Activated T-helper 1 cell treated with anti-CD3 and anti-CD28 coated beads, Interleukin-12 subunit alpha, Interleukin-12 subunit beta, Interleukin-2, Interleukin-4 antibody, amounts not matched to agents 30 ng/mL and 10 ng/mL and 1 ng/mL, durations not matched to agents 14 hours and 24 hours and 36 hours (primary cell): ENCODE measurements at regions of chr17 and their contacts with region 1.

Region 1: DNA sequence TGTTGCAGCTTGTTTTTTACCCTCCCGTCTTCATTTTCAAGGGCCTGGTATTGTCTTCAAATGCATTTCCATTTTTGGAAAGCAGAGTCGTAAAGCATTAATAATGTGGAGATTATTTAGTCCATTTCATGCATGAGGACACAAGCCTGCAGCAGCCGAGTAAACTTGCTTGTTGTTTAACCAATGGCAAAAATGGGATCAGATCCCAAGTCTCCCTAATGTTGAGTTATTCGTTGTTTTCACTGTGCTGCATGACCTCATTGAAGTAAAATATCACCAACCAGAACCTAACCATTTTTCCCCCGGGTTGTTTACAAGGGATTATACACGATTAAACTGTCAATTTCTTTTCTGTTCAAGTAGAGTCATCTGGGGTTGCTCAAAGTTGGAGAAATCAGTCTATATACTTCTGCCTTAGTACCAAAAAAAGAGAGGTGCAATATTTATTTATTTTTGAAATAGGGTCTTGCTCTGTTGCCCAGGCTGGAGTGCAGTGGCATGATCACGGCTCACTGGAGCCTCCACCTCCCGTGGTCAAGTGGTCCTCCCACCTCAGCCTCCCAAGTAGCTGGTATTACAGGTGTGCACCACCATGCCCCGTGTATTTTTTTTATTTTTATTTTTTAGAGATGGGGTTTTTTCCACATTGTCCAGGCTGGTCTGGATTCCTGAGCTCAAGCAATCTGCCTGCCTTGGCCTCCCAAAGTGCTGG is 12.4 kb downstream of the AMZ2 start:
- DNase-seq: no peak
- H3K4me3 Mint-ChIP-seq: peak overlapping the region; percentile 80
- H3K27ac Mint-ChIP-seq: no peak overlapping the region
- H3K4me1 Mint-ChIP-seq: peaks cover 58% of the 10 kb centered on the region
- H3K27me3 Mint-ChIP-seq: no peaks in the 10 kb centered on the region

Region 2: DNA sequence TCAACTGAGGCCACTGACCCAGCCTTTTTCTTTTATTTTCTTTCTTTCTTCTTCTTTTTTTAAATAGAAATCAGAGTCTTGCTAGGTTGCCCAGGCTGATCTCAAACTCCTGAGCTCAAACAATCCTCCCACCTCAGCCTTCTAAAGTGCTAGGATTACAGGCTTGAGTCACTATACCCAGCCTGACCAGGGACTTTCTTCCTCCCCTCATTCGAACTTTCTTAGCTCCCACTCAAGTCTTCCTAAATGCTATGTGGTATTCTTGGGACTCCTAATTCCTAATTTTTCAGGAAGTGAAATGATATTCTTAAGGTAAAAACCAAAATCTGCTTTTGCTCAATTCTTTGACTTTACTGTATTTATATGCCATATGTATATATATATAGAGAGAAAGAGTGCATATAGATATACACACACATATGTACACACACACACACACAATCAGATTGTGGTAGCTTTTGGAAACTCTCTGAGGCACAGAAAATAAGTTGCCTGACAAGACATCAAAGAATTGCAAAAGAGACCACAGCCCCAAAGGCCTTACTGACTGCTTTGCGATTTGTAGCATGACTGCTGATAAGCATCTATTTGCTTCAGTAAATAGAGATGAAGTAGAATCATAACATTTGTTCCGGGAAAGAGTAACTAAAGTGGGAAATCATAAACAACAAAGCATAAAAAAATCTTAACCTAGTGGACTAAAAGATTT is 21.9 kb before region 1 on chr17:
- intact Hi-C with region 1: loop called (anchors 1 kb)
- DNase-seq: no peak
- H3K4me3 Mint-ChIP-seq: peak overlapping the region; percentile 82
- H3K27ac Mint-ChIP-seq: peak overlapping the region; percentile 95
- H3K4me1 Mint-ChIP-seq: peaks cover 53% of the 10 kb centered on the region
- H3K27me3 Mint-ChIP-seq: no peaks in the 10 kb centered on the region

Region 3: DNA sequence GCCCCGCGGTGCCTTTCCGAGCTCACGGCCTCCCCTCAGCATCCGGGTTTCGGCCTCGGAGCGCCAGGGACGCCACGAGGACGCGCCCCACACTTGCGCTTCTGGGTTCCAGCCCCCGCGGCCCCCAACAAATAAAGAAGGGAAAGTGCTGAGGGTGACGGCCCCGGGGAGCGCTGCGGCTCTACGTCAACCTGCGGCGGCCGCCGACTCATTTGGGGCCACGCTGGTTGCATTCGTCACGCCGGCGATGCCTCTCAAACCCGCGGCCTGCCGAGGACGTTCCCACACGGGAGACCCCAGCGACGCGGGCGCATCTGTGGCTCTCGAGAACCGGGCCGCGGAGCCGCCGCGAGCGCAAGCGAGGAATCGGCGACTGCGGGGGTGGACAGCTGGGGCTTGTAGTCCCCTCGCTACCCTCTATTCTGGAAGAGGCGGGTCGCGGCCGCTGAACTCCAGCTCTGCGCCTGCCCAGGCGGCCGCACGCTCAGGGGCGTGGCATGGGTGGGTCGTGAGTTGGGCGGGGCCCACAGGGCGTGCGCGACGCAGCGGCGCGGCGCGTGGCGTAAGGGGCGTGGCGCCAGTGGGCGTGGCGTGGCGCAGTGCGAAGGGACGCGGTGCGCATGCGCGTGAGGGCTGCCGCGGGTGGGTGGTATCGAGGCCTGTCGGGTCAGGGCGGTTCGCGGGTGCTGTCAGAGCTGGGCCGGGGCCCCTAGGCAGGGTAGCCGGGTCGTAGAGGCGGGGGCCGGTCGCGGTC is 12.6 kb before region 1 on chr17 and contains the start of gene AMZ2:
- intact Hi-C with region 1: loop called (anchors 1 kb)
- DNase-seq: peak; percentile 98
- H3K4me3 Mint-ChIP-seq: peak within 1 kb of the TSS; percentile 88
- H3K27ac Mint-ChIP-seq: peak within 1 kb of the TSS; percentile 96
- H3K4me1 Mint-ChIP-seq: peaks cover 49% of the 10 kb centered on the region
- H3K27me3 Mint-ChIP-seq: no peaks in the 10 kb centered on the region
- total RNA-seq, gene AMZ2: 67.3 and 75.7 TPM in 2 replicates

Region 4: DNA sequence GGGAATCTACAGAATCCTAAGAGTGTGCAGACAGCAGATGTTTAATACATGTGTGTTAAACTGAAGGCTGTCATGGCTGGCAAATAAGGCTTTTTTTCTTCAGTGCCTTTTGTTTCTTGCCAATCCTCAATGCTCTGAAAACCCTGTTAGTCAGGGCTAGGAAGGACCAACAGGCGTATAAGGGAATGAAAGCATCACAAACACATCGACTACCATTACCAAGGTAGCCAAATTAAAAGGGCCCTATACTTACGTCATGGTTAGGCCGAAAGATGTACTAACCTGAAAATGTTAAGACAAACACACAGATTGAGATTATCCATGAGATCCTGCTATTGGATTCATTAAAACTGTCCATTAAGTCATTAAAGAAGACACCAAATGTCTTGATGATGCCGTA is 17.6 kb after region 1 on chr17:
- intact Hi-C with region 1: no loop called
- DNase-seq: no peak
- H3K4me3 Mint-ChIP-seq: no peak overlapping the region
- H3K27ac Mint-ChIP-seq: no peak overlapping the region
- H3K4me1 Mint-ChIP-seq: no peaks in the 10 kb centered on the region
- H3K27me3 Mint-ChIP-seq: no peaks in the 10 kb centered on the region

Region 5: GRCh38 chr17:68398691-68399637 is 138.8 kb after region 1 on chr17:
- intact Hi-C with region 1: loop called (anchors 2 kb)
- DNase-seq: peak; percentile 9
- H3K4me3 Mint-ChIP-seq: peak overlapping the region; percentile 49
- H3K27ac Mint-ChIP-seq: peak overlapping the region; percentile 85
- H3K4me1 Mint-ChIP-seq: peaks cover 51% of the 10 kb centered on the region
- H3K27me3 Mint-ChIP-seq: no peaks in the 10 kb centered on the region

Region 6: DNA sequence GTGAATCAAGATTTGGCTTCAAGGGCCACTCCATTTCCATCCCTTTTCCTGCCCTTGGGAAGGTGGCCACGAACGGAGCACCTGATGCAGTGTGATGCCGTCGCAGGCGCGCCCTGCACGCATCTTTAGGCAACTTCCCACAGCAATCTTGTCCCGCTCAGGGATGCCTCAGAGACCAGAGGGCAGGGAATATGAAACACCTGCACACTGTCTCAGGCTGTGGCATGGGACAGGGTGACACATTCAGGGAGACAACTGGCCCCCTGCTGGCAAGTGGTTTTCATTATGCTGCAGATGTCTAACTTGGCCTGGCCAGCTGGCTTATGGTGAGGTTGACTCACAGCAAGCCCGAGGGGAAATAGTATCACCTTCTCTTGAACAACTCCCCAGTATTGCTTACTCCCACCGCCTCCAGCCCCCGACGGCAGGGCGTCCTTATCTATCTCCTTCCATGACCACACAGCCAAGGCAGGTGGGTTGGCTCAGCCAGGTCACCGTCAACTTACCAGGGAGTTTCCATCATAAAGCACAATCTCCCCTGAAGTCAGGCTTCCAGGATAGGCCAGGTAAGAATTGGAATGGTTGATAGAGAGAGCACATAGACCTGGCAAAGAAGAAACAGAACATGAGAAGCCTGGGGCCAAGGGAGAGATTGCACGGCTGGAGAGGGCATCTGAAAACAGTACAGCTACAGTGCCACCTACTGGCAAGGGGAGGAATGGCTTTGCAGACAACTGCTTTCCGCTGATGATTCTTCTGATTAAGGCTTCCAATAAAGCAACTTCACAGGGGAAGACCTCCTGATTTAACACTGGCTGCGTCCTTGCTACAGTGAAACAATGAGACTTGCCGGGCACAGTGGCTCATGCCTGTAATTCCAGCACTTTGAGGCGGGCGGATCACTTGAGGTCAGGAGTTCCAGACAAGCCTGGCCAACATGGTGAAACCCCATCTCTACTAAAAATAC is 176.0 kb after region 1 on chr17:
- intact Hi-C with region 1: loop called (anchors 1 kb)
- DNase-seq: peak; percentile 77
- H3K4me3 Mint-ChIP-seq: peak overlapping the region; percentile 64
- H3K27ac Mint-ChIP-seq: peak overlapping the region; percentile 91
- H3K4me1 Mint-ChIP-seq: peaks cover 64% of the 10 kb centered on the region
- H3K27me3 Mint-ChIP-seq: no peaks in the 10 kb centered on the region